B cell (primary cell): ENCODE measurements at regions of chr19 and their contacts with region 1.

Region 1: DNA sequence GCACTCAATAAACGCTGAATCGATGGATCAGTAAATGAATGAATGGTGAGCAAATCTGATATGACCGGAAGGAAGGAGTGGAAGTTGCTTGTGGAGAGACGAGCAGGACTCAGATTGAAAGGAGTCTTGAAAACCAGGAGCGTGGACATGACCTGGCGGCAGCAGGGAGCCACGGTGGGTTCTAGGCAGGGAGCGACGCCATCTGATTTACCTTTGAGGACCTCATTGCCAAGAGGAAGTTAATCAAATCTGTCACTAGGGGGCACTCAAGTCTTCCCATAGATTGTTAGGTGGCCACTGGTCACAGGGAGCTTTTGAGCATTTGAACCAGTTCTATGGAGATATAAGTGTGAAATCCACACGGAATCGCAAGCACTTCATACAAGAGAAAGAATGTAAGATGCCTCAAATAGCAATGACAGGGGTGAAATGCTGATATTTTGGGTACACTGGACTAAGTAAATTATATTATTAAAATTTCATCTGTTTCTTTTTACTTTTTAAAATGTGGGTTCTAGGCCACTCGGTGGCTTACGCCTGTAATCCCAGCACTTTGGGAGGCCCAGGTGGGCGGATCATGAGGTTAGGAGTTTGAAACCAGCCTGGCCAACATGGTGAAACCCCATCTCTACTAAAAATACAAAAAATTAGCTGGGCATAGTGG is 9.2 kb upstream of the FBN3 start:
- DNase-seq: peak; percentile 87
- ATAC-seq: peak; percentile 65
- H3K4me3 ChIP-seq: no peak overlapping the region
- H3K4me3 Mint-ChIP-seq: peak overlapping the region; percentile 33
- H3K27ac ChIP-seq: no peak overlapping the region
- H3K27ac Mint-ChIP-seq: peak overlapping the region; percentile 73
- H3K4me1 ChIP-seq: peaks cover 6 to 15% of the 10 kb centered on the region in 2 donors
- H3K4me1 Mint-ChIP-seq: peaks cover 24% of the 10 kb centered on the region
- H3K27me3 ChIP-seq: peaks cover 0 to 14% (median 2%) of the 10 kb centered on the region in 4 experiments
- H3K27me3 Mint-ChIP-seq: peaks cover 14% of the 10 kb centered on the region
- CTCF ChIP-seq: peak; percentile 82

Region 2: GRCh38 chr19:8194528-8195267 is 36.2 kb after region 1 on chr19:
- CTCF ChIA-PET with region 1: interaction called, 26 read pairs
- POLR2A ChIA-PET with region 1: interaction called, 6 read pairs
- intact Hi-C with region 1: loop called (anchors 1 kb)
- DNase-seq: peak; percentile 82
- ATAC-seq: peak; percentile 19
- H3K4me3 ChIP-seq: peak overlapping the region; percentile 18 to 53 (median 38)
- H3K4me3 Mint-ChIP-seq: peak overlapping the region; percentile 87
- H3K27ac ChIP-seq: peak overlapping the region; percentile 93 to 96
- H3K27ac Mint-ChIP-seq: peak overlapping the region; percentile 97
- H3K4me1 ChIP-seq: peaks cover 57 to 67% of the 10 kb centered on the region in 2 donors
- H3K4me1 Mint-ChIP-seq: peaks cover 60% of the 10 kb centered on the region
- H3K27me3 ChIP-seq: no peaks in the 10 kb centered on the region
- H3K27me3 Mint-ChIP-seq: no peaks in the 10 kb centered on the region
- CTCF ChIP-seq: no peak

Region 3: GRCh38 chr19:8208922-8209461 is 50.4 kb after region 1 on chr19 and contains the start of gene CERS4:
- CTCF ChIA-PET with region 1: interaction called, 25 read pairs
- POLR2A ChIA-PET with region 1: interaction called, 6 read pairs
- intact Hi-C with region 1: loop called (anchors 1 kb)
- DNase-seq: no peak
- ATAC-seq: peak; percentile 85
- H3K4me3 ChIP-seq: peak within 1 kb of the TSS; percentile 48 to 96 (median 93)
- H3K4me3 Mint-ChIP-seq: peak within 1 kb of the TSS; percentile 94
- H3K27ac ChIP-seq: peak within 1 kb of the TSS; percentile 87 to 98
- H3K27ac Mint-ChIP-seq: peak within 1 kb of the TSS; percentile 93
- H3K4me1 ChIP-seq: peaks cover 29 to 37% of the 10 kb centered on the region in 2 donors
- H3K4me1 Mint-ChIP-seq: peaks cover 41% of the 10 kb centered on the region
- H3K27me3 ChIP-seq: no peaks in the 10 kb centered on the region
- H3K27me3 Mint-ChIP-seq: no peaks in the 10 kb centered on the region
- CTCF ChIP-seq: no peak
- total RNA-seq, gene CERS4: 125 and 146 TPM in 2 replicates

Region 4: DNA sequence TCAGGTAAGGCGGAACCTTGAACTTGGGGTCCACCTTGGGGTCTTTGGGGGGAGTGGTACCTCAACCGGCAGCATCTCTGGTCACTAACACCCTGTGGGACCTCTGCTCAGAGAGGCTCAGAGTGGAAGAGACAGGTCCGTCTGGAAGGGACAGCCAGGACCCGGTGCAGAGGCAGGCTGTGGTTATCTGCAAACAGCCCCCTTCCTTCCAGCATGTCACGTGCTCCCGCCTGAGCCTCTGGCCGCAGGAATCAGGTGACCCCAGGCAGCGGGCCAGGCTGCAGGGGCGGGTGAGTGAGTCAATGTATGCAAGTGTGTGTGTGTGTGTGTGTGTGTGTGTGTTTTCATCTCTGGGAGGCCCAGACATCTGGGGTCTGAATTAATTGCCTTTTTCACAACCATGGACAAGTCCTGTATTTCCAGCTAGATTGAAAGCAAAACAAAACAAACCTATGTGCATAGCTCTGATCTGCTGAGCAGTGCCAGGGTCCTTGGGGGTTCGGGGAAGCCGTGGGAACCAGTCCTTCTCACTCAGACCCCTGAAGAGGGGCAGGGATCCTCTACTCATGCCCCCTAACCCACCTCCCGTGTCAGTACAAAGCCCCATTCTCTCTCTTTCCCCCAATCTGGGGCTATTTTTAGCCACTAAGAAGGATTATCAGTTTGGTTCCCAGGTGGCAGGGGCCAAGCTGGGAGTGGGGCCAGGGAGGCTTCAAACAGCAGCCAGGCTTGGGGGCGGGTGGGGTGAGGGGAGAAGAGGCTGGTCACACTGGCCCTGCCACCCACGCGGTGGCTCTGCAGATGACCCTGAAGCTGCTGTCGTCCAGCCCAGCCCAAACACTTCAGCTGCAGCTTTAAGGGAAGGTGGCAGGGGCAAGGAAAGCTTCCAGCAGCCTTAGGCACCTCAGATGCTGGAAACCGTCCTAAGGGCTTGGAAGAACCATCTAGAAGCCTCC is 82.0 kb after region 1 on chr19:
- CTCF ChIA-PET with region 1: interaction called, 29 read pairs
- POLR2A ChIA-PET with region 1: interaction called, 6 read pairs
- intact Hi-C with region 1: no loop called
- DNase-seq: peak; percentile 67
- ATAC-seq: peak; percentile 81
- H3K4me3 ChIP-seq: peak overlapping the region in 1 of 5 experiments; percentile 9
- H3K4me3 Mint-ChIP-seq: peak overlapping the region; percentile 73
- H3K27ac ChIP-seq: peak overlapping the region in 1 of 2 donors; percentile 21
- H3K27ac Mint-ChIP-seq: peak overlapping the region; percentile 77
- H3K4me1 ChIP-seq: peaks cover 20 to 29% of the 10 kb centered on the region in 2 donors
- H3K4me1 Mint-ChIP-seq: peaks cover 52% of the 10 kb centered on the region
- H3K27me3 ChIP-seq: no peaks in the 10 kb centered on the region
- H3K27me3 Mint-ChIP-seq: no peaks in the 10 kb centered on the region
- CTCF ChIP-seq: no peak

Region 5: GRCh38 chr19:8252922-8253589 is 94.5 kb after region 1 on chr19:
- CTCF ChIA-PET with region 1: interaction called, 62 read pairs
- POLR2A ChIA-PET with region 1: interaction called, 5 read pairs
- intact Hi-C with region 1: loop called (anchors 1 kb)
- DNase-seq: peak; percentile 87
- ATAC-seq: peak; percentile 95
- H3K4me3 ChIP-seq: no peak overlapping the region
- H3K4me3 Mint-ChIP-seq: no peak overlapping the region
- H3K27ac ChIP-seq: peak overlapping the region in 1 of 2 donors; percentile 28
- H3K27ac Mint-ChIP-seq: no peak overlapping the region
- H3K4me1 ChIP-seq: peaks cover 5 to 7% of the 10 kb centered on the region in 2 donors
- H3K4me1 Mint-ChIP-seq: peaks cover 8% of the 10 kb centered on the region
- H3K27me3 ChIP-seq: no peaks in the 10 kb centered on the region
- H3K27me3 Mint-ChIP-seq: no peaks in the 10 kb centered on the region
- CTCF ChIP-seq: peak; percentile 98

Region 6: GRCh38 chr19:8505680-8506401 is 347.3 kb after region 1 on chr19:
- CTCF ChIA-PET with region 1: no interaction called
- POLR2A ChIA-PET with region 1: no interaction called
- intact Hi-C with region 1: no loop called
- DNase-seq: peak; percentile 82
- ATAC-seq: peak; percentile 78
- H3K4me3 ChIP-seq: peak overlapping the region in 4 of 5 experiments; percentile 64 to 72 (median 68)
- H3K4me3 Mint-ChIP-seq: peak overlapping the region; percentile 93
- H3K27ac ChIP-seq: no peak overlapping the region
- H3K27ac Mint-ChIP-seq: peak overlapping the region; percentile 68
- H3K4me1 ChIP-seq: peaks cover 0 to 24% of the 10 kb centered on the region in 2 donors
- H3K4me1 Mint-ChIP-seq: peaks cover 9% of the 10 kb centered on the region
- H3K27me3 ChIP-seq: peaks cover 0 to 10% (median 2%) of the 10 kb centered on the region in 4 experiments
- H3K27me3 Mint-ChIP-seq: no peaks in the 10 kb centered on the region
- CTCF ChIP-seq: peak; percentile 73